Activated CD8-positive, alpha-beta memory T cell treated with anti-CD3 and anti-CD28 coated beads, Interleukin-2, amount 10 ng/mL, durations not matched to agents 7 days and 5 days (primary cell): ENCODE measurements at regions of chr7 and their contacts with region 1.

Region 1: DNA sequence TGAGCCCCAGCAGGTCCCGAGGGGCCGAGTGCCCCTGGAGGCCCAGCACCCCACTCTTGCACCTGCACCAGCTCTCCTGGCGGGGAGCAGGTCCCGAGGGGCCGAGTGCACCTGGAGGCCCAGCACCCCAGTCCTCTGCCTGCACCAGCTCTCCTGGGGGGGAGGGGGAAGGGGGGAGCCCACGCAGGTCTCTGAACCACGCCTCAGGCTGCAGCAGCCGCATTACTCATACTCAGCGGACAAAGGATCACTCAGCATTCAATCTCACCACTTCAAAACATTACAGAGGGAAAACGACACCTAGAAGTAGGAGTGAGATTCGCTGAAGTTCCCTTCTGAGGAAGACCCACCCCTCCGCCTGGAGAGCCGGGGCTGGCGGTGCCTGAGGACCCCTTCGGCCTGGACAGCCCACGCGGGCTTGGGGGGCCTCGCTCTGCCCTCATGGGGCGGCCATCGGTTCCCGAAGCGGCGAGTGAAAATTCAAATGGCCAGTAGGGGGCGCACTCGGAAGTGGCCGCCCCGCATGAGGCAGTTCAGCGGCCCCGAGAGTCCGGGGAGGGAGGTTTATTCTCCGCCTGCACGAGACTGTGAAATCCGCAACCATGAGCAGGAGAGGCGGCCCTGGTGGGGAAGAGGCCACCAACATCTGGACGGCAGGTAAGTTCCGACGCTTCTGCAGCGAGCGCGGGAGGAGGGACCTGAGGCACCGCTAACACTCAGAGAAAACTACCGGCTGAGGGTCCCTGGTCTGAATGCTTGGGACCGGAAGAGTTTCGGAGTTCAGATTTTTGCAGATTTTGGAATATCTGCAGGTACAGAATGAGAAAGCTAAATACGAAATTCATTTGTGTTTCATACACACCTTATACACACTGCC is 1.1 kb upstream of the GPER1 start:
- DNase-seq: peak; percentile 82
- ATAC-seq: peak; percentile 92
- H3K4me3 Mint-ChIP-seq: peak overlapping the region; percentile 56
- H3K27ac Mint-ChIP-seq: no peak overlapping the region
- H3K4me1 Mint-ChIP-seq: peaks cover 7% of the 10 kb centered on the region
- H3K27me3 Mint-ChIP-seq: peaks cover 6% of the 10 kb centered on the region

Region 2: GRCh38 chr7:1103009-1103788 is 16.4 kb after region 1 on chr7:
- CTCF ChIA-PET with region 1: interaction called, 20 read pairs
- DNase-seq: peak; percentile 67
- ATAC-seq: peak; percentile 79
- H3K4me3 Mint-ChIP-seq: peak overlapping the region; percentile 60
- H3K27ac Mint-ChIP-seq: peak overlapping the region; percentile 83
- H3K4me1 Mint-ChIP-seq: peaks cover 28% of the 10 kb centered on the region
- H3K27me3 Mint-ChIP-seq: no peaks in the 10 kb centered on the region